CD4-positive, alpha-beta T cell (primary cell): ENCODE measurements at regions of chr20 and their contacts with region 1.

Region 1: DNA sequence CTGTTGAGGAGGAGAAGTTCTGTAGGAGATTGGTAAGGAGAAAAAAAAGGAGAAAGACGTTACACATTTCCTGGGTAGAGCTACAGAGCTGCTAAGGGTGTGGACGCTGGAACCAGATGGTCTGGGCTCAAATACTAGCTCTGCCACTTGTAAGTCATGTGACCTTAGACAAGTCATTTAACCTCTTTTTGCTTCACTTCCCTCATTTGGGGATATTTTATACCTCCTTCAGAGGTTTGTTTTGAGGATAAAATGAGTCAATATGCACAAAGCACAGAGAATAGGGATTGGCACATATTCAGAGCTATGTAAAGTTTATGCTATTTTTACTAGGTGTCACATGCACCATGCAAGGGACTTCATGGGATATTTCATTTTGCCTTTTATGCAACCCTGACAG is 708.8 kb downstream of the DHX35 start:
- DNase-seq: no peak
- ATAC-seq: no peak
- H3K4me3 ChIP-seq: no peak overlapping the region
- H3K4me3 Mint-ChIP-seq: no peak overlapping the region
- H3K27ac ChIP-seq: no peak overlapping the region
- H3K27ac Mint-ChIP-seq: no peak overlapping the region
- H3K4me1 ChIP-seq: no peaks in the 10 kb centered on the region
- H3K4me1 Mint-ChIP-seq: no peaks in the 10 kb centered on the region
- H3K27me3 ChIP-seq: no peaks in the 10 kb centered on the region
- H3K27me3 Mint-ChIP-seq: peaks cover 4% of the 10 kb centered on the region
- CTCF ChIP-seq: no peak

Region 2: DNA sequence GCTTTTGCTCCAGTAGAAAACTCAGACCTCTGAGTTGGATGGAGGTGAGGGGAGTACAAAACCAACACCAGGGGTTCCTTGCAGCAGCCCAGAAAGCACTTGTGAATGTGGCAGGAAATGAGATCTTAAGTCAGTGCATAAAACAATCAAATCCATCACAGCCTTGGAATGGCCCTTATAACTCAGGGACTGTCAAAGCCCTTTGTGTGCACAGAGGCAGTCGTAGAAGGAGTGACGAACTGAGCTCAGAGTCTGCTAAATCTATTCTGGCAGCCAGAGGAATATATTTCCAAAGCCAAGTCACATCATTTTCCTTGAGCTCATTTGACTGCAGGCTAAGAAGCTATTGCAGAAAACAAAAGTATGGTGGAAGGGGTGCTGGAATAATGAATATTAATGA is 32.3 kb before region 1 on chr20:
- CTCF ChIA-PET with region 1: no interaction called
- POLR2A ChIA-PET with region 1: no interaction called
- intact Hi-C with region 1: loop called in 1 of 2 experiments (anchors 5 kb)
- DNase-seq: no peak
- ATAC-seq: no peak
- H3K4me3 ChIP-seq: no peak overlapping the region
- H3K4me3 Mint-ChIP-seq: no peak overlapping the region
- H3K27ac ChIP-seq: no peak overlapping the region
- H3K27ac Mint-ChIP-seq: no peak overlapping the region
- H3K4me1 ChIP-seq: no peaks in the 10 kb centered on the region
- H3K4me1 Mint-ChIP-seq: no peaks in the 10 kb centered on the region
- H3K27me3 ChIP-seq: no peaks in the 10 kb centered on the region
- H3K27me3 Mint-ChIP-seq: no peaks in the 10 kb centered on the region
- CTCF ChIP-seq: no peak

Region 3: DNA sequence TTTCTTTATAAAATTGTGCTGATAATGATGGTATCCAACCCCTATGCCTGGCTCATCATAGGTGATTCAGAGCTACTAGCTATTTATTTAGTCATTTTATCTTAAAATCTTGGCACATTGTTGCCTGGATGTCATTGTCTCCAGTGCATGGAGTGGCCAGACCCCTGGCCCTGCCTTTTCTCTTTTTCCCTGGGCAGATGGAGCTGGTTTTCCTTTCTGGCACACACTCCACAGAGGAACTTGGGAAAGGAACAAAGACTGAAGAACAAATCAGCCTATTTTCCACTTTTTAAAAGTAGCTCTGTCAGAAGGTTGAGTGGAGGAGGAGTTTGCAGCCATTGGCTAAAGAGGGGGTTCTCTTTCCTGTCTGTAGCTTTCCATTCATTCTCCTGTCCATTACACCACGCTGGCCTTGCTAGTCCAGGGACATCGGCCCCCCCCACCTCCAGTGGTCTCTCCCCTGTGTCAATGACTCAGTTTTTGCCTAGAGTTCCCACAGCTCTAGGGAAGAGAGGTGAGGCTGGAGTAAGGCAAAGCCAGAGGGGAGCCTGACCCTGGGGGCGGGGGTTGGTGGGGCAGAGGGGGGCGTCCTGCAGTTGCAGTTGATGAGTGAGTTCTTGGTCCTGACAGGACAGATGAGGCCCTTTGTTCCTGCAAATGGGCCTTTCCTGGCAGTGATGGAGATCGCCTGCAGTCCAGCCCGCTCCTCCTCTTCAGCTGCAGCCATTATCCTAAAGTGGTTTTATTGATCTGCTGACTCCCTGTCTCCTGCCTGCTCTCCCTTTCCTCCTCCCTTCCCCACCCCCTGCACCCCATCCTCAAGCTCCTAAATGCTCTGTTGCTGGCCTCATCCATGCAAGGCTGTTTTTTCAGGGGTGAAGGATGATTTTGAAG is 65.7 kb after region 1 on chr20:
- CTCF ChIA-PET with region 1: no interaction called
- POLR2A ChIA-PET with region 1: no interaction called
- intact Hi-C with region 1: no loop called
- DNase-seq: no peak
- ATAC-seq: no peak
- H3K4me3 ChIP-seq: no peak overlapping the region
- H3K4me3 Mint-ChIP-seq: no peak overlapping the region
- H3K27ac ChIP-seq: no peak overlapping the region
- H3K27ac Mint-ChIP-seq: no peak overlapping the region
- H3K4me1 ChIP-seq: no peaks in the 10 kb centered on the region
- H3K4me1 Mint-ChIP-seq: no peaks in the 10 kb centered on the region
- H3K27me3 ChIP-seq: no peaks in the 10 kb centered on the region
- H3K27me3 Mint-ChIP-seq: no peaks in the 10 kb centered on the region
- CTCF ChIP-seq: no peak